Mammary epithelial cell (primary cell): ENCODE measurements at regions of chr7 and their contacts with region 1.

Region 1: GRCh38 chr7:30938435-30939316 is 25.1 kb upstream of the GHRHR start:
- DNase-seq: peak; percentile 61
- H3K4me3 ChIP-seq: no peak overlapping the region
- H3K27ac ChIP-seq: no peak overlapping the region
- H3K4me1 ChIP-seq: peaks cover 11% of the 10 kb centered on the region
- H3K27me3 ChIP-seq: peaks cover 4% of the 10 kb centered on the region
- CTCF ChIP-seq: peak; percentile 91 to 93

Region 2: GRCh38 chr7:30974605-30975255 is 36.1 kb after region 1 on chr7:
- CTCF ChIA-PET with region 1: no interaction called
- dilution Hi-C with region 1: no loop called
- in situ Hi-C with region 1: no loop called
- intact Hi-C with region 1: loop called (anchors 1 kb)
- DNase-seq: peak; percentile 76
- H3K4me3 ChIP-seq: no peak overlapping the region
- H3K27ac ChIP-seq: no peak overlapping the region
- H3K4me1 ChIP-seq: no peaks in the 10 kb centered on the region
- H3K27me3 ChIP-seq: no peaks in the 10 kb centered on the region
- CTCF ChIP-seq: peak; percentile 89 to 93